AG04450 (cell line): ENCODE measurements at regions of chr5 and their contacts with region 1.

Region 1: GRCh38 chr5:80083101-80083890 is 48.1 kb downstream of the THBS4 start:
- DNase-seq: peak; percentile 29
- H3K4me3 ChIP-seq: no peak overlapping the region
- H3K27ac ChIP-seq: no peak overlapping the region
- H3K27me3 ChIP-seq: peaks cover 4% of the 10 kb centered on the region
- CTCF ChIP-seq: peak; percentile 75

Region 2: DNA sequence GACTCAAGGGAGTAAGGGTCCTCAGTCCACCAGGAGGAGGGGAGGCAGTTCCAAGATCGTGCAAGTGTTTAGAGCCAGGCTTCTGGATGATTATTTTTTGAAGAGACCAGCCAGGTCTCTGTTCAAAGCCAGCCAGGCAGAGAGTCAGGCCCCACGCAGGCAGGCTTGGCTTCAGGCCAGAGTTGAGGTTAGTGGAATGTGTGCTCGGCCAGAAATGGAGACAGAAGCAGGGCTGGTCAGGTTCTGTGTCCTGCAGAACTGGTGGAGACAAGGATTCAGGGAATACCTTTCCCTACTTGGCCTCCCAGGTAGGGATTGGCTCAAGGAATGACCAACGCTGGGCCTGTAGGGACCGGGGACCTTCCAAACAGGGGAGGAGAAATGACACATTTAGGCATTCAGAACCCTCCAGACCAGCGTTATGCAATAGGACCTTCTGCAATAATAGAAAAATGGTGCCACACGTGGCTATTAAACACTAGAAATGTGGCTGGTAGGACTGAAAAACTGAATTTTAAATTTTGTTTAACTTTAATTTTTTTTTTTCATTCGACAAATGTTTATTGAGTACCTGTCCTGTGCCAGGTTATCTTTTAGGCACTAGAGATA is 287.4 kb before region 1 on chr5:
- CTCF ChIA-PET with region 1: no interaction called
- POLR2A ChIA-PET with region 1: no interaction called
- DNase-seq: no peak
- H3K4me3 ChIP-seq: no peak overlapping the region
- H3K27ac ChIP-seq: no peak overlapping the region
- H3K27me3 ChIP-seq: peaks cover 3% of the 10 kb centered on the region
- CTCF ChIP-seq: no peak

Region 3: DNA sequence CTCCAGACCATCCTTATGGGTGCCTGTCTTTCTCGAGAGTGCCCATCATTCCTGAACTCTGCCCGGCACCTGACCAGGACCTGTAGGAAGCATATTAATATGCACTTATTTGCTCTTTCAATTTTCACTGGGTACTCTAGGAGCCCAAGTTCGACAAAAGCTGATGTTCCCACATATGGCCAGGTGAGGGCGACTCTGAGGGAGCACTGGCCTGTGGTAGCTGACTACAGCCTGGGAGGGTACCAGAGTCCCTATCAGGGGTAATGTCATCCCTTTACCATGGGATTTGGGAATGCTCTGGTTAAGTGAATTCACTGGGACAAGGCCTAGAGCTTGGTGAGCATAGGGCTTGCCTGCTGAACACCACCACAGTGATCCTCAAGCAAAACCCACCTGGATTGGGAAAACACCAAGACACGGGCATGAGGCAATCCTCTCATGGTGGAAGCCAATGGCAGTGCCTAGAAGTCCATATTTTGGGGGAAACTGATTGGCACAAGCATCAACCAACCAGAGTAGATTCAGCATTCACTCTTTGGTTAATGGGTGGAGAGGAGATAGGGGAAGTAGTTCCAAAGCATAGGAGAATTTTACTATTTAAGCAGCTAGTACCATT is 204.5 kb before region 1 on chr5:
- CTCF ChIA-PET with region 1: interaction called, 22 read pairs
- POLR2A ChIA-PET with region 1: no interaction called
- DNase-seq: no peak
- H3K4me3 ChIP-seq: no peak overlapping the region
- H3K27ac ChIP-seq: no peak overlapping the region
- H3K27me3 ChIP-seq: peaks cover 2% of the 10 kb centered on the region
- CTCF ChIP-seq: peak; percentile 46

Region 4: GRCh38 chr5:79936002-79936645 is 147.2 kb before region 1 on chr5:
- CTCF ChIA-PET with region 1: interaction called, 12 read pairs
- POLR2A ChIA-PET with region 1: no interaction called
- DNase-seq: no peak
- H3K4me3 ChIP-seq: no peak overlapping the region
- H3K27ac ChIP-seq: no peak overlapping the region
- H3K27me3 ChIP-seq: peaks cover 5% of the 10 kb centered on the region
- CTCF ChIP-seq: no peak

Region 5: GRCh38 chr5:80060966-80061365 is 22.3 kb before region 1 on chr5:
- CTCF ChIA-PET with region 1: interaction called, 20 read pairs
- POLR2A ChIA-PET with region 1: no interaction called
- DNase-seq: no peak
- H3K4me3 ChIP-seq: no peak overlapping the region
- H3K27ac ChIP-seq: no peak overlapping the region
- H3K27me3 ChIP-seq: peaks cover 6% of the 10 kb centered on the region
- CTCF ChIP-seq: no peak

Region 6: DNA sequence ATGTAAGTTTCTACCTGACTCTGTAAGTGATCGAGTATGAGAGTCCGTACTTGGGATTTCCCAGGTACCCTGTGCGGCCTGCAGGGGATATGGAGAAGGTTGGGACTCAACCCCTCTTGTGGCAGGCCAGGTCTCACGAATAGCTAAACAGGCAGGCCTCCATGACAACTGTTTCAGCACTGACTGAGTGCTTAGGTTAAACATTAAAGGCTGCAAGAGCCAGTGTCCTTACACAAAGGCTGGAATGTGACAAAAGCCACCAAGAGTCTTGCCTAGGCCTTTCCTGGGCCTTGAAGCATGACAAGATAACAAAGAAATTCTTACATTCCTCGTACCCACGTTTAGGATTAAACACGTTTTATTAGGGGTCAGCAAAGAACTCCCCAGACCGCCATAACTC is 10.5 kb after region 1 on chr5:
- CTCF ChIA-PET with region 1: interaction called, 28 read pairs
- POLR2A ChIA-PET with region 1: no interaction called
- DNase-seq: no peak
- H3K4me3 ChIP-seq: no peak overlapping the region
- H3K27ac ChIP-seq: no peak overlapping the region
- H3K27me3 ChIP-seq: peaks cover 2% of the 10 kb centered on the region
- CTCF ChIP-seq: no peak

Region 7: GRCh38 chr5:80308526-80308925 is 225.2 kb after region 1 on chr5:
- CTCF ChIA-PET with region 1: interaction called, 235 read pairs
- POLR2A ChIA-PET with region 1: no interaction called
- DNase-seq: no peak
- H3K4me3 ChIP-seq: no peak overlapping the region
- H3K27ac ChIP-seq: no peak overlapping the region
- H3K27me3 ChIP-seq: no peaks in the 10 kb centered on the region
- CTCF ChIP-seq: no peak